PC-3 (cell line): ENCODE measurements at regions of chr18 and their contacts with region 1.

Region 1: GRCh38 chr18:27017901-27018500 is 152.5 kb upstream of the AQP4 start:
- DNase-seq: peak; percentile 45
- ATAC-seq: peak; percentile 38; the same call in 1 of the 2 replicates
- H3K4me3 ChIP-seq: no peak overlapping the region
- H3K27ac ChIP-seq: no peak overlapping the region
- H3K4me1 ChIP-seq: no peaks in the 10 kb centered on the region
- H3K27me3 ChIP-seq: peaks cover 56% of the 10 kb centered on the region
- CTCF ChIP-seq: peak; percentile 81

Region 2: DNA sequence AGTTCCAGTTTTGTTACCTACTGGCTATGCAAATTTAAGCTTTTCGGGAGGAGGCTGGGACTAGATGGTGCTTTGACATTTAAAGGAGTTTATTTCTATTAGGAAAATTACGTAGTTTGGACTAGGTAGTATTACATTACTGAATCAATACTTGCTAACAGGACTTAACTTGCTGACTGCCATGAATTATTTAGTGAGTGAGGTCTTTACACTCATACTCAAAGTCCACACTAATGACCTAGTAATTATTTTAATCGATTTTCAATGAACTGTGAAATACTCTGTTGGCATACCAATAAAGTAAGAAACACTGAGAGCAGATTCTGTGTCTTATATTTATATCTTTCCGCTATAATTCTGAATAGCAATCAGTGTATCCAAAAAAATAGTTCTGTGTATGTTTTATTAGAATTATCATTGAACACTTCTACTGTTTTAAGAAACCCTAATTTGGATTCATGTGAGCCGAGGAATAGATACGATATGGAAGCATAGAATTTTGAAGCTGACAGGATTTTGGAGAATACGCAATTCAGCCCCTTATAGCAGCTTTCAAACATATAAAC is 112.1 kb after region 1 on chr18:
- CTCF ChIA-PET with region 1: no interaction called
- POLR2A ChIA-PET with region 1: no interaction called
- intact Hi-C with region 1: no loop called
- DNase-seq: no peak
- ATAC-seq: no peak
- H3K4me3 ChIP-seq: no peak overlapping the region
- H3K27ac ChIP-seq: no peak overlapping the region
- H3K4me1 ChIP-seq: no peaks in the 10 kb centered on the region
- H3K27me3 ChIP-seq: peaks cover 41% of the 10 kb centered on the region
- CTCF ChIP-seq: no peak

Region 3: GRCh38 chr18:27298214-27298804 is 280.3 kb after region 1 on chr18:
- CTCF ChIA-PET with region 1: interaction called, 3 read pairs
- POLR2A ChIA-PET with region 1: no interaction called
- intact Hi-C with region 1: loop called (anchors 1 kb)
- DNase-seq: peak; percentile 25
- ATAC-seq: no peak
- H3K4me3 ChIP-seq: no peak overlapping the region
- H3K27ac ChIP-seq: no peak overlapping the region
- H3K4me1 ChIP-seq: no peaks in the 10 kb centered on the region
- H3K27me3 ChIP-seq: peaks cover 46% of the 10 kb centered on the region
- CTCF ChIP-seq: peak; percentile 55

Region 4: DNA sequence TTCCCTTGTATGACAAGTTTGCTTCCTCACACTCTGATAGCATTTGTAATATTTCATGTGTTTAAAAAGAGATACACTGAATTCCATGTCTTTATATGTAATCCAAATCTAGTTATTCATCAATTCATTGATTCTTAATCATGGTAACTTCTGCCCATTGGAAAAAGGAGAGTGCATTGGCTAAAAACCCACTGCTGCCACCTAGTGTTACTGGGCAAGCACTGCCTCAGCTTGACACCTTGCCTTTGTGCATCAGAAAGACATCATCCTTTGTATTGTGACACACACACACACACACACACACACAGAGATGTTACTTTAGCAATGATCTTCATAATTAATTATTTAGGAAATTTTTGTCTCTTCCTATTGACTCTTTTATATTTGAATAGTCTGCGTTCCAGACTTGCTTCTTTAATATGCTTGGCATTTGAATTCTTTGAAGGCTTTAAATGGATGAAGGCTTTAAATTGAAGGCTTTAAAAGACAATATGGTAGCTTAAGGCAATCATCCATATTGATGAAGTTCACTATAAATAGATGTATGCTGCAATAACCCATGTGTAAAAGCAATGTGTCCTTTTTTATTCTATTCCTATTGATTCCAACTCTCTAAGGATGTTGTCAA is 581.3 kb after region 1 on chr18:
- CTCF ChIA-PET with region 1: interaction called, 3 read pairs
- POLR2A ChIA-PET with region 1: no interaction called
- intact Hi-C with region 1: loop called (anchors 5 kb)
- DNase-seq: peak; percentile 68
- ATAC-seq: peak; percentile 59
- H3K4me3 ChIP-seq: no peak overlapping the region
- H3K27ac ChIP-seq: no peak overlapping the region
- H3K4me1 ChIP-seq: peaks cover 2% of the 10 kb centered on the region
- H3K27me3 ChIP-seq: peaks cover 16% of the 10 kb centered on the region
- CTCF ChIP-seq: peak; percentile 92